Ovary (tissue), 10 donors: ENCODE measurements at regions of chr1 and their contacts with region 1.

Region 1: DNA sequence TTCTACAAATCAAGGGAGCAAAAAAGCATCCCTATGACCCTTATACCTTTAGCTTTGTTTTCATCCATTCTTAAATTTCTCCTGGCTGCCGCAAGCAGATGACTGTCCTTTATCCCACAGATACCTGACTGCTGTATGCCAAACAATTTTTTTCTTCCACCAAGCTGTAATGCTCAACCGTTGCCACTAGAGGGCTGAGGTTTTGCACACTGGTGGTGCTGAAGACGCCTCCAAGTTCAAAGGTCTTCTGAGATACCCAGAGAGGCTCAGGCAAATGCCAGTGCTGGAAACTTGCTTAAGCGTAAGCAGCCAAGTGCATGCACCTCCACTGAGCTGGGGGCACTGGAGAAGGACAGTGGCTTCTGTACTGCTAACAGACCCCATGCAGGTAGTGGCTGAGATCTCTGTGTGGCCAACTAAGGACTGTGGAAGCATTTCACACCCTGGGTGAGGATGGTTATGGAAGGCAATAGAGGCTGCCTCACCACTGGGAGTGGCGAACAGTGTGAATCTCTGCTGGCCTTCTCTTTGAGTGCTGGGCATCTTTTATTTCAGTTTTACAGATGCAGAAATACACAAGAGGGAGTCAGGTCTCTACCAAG is 28.5 kb downstream of the CNIH3 start:
- DNase-seq: peak in 2 of 5 donors; percentile 35 to 36
- H3K4me3 ChIP-seq: no peak overlapping the region
- H3K27ac ChIP-seq: no peak overlapping the region
- H3K4me1 ChIP-seq: no peaks in the 10 kb centered on the region
- H3K27me3 ChIP-seq: no peaks in the 10 kb centered on the region
- CTCF ChIP-seq: peak; percentile 41 to 66 (median 52)
- EP300 ChIP-seq: no peak
- POLR2A ChIP-seq: no peak

Region 2: GRCh38 chr1:224851210-224851847 is 206.7 kb after region 1 on chr1:
- intact Hi-C with region 1: loop called in 1 of 4 experiments (anchors 10 kb)
- DNase-seq: peak in 4 of 5 donors; percentile 11 to 53 (median 28)
- H3K4me3 ChIP-seq: no peak overlapping the region
- H3K27ac ChIP-seq: no peak overlapping the region
- H3K4me1 ChIP-seq: no peaks in the 10 kb centered on the region
- H3K27me3 ChIP-seq: no peaks in the 10 kb centered on the region
- CTCF ChIP-seq: no peak
- EP300 ChIP-seq: no peak
- POLR2A ChIP-seq: no peak

Region 3: GRCh38 chr1:224863970-224864369 is 219.3 kb after region 1 on chr1:
- intact Hi-C with region 1: loop called in 2 of 4 experiments (anchors 5 to 10 kb)
- DNase-seq: no peak
- H3K4me3 ChIP-seq: no peak overlapping the region
- H3K27ac ChIP-seq: no peak overlapping the region
- H3K4me1 ChIP-seq: no peaks in the 10 kb centered on the region
- H3K27me3 ChIP-seq: no peaks in the 10 kb centered on the region
- CTCF ChIP-seq: no peak
- EP300 ChIP-seq: no peak
- POLR2A ChIP-seq: no peak

Region 4: GRCh38 chr1:224922404-224923164 is 277.9 kb after region 1 on chr1:
- intact Hi-C with region 1: loop called in 1 of 4 experiments (anchors 10 kb)
- DNase-seq: peak in 1 of 5 donors; percentile 21
- H3K4me3 ChIP-seq: no peak overlapping the region
- H3K27ac ChIP-seq: no peak overlapping the region
- H3K4me1 ChIP-seq: no peaks in the 10 kb centered on the region
- H3K27me3 ChIP-seq: no peaks in the 10 kb centered on the region
- CTCF ChIP-seq: peak; percentile 39 to 66 (median 40)
- EP300 ChIP-seq: no peak
- POLR2A ChIP-seq: no peak